ENCODE measurements at regions of chr11 and their contacts with region 1.

Region 1: DNA sequence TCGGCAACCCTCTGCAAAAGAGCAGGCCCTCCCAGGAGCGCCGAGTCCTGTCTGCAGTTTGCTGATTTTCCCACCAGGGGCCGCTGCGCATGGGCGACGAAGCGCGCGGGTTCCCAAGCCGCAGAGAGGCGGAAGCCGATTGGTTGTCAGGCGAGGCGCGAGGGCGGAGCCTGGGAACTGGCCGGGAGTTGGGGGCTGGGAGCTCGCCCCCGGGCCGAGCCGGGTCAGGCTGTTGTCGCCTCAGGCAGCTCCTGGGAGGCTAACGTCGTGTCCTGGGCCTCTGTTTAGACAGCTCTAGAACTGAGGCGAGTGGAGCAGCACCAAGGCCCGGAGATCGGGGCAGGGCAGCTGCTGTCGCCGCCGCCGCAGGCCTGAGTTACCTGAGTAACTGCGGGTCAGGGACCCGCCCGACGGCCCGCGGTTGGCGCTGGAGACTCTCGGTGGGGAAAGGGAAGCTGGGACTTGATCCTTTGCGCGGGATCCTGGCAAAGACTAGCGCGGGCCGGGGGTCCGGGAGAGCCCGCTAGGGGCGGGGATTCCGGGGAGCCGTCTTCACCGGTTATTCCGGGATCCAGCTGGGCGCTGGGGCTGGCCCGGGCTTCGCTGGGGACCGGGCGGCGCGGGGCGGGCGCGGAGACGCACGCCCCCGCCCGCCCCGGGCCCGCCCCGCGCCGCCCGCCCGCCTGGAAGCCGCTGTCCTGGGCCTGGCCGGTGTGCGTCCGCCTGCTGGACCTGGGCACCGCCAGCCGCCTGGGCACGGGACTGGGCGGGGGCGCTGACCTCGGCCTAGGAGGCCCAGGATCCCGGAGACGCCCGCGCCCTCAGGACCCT is at the start of gene STIM1:
- DNase-seq: peak; percentile 96 to 98 (median 97)
- H3K4me3 ChIP-seq: peak within 1 kb of the TSS; percentile 91 to 92
- H3K4me3 Mint-ChIP-seq: peak within 1 kb of the TSS; percentile 90 to 97 (median 94)
- H3K27ac ChIP-seq: peak within 1 kb of the TSS; percentile 94
- H3K27ac Mint-ChIP-seq: peak within 1 kb of the TSS; percentile 99 to 100 (median 99)
- H3K4me1 ChIP-seq: peaks cover 64% of the 10 kb centered on the region
- H3K4me1 Mint-ChIP-seq: peaks cover 49 to 71% (median 61%) of the 10 kb centered on the region in 4 donors
- H3K27me3 ChIP-seq: no peaks in the 10 kb centered on the region
- H3K27me3 Mint-ChIP-seq: no peaks in the 10 kb centered on the region
- total RNA-seq, gene STIM1: 87.1 to 87.4 TPM

Region 2: GRCh38 chr11:3807909-3808860 is 47.0 kb before region 1 on chr11 and contains the start of gene PGAP2:
- CTCF ChIA-PET with region 1: interaction called, 24 read pairs
- POLR2A ChIA-PET with region 1: interaction called, 27 read pairs
- intact Hi-C with region 1: no loop called
- DNase-seq: peak; percentile 42 to 62 (median 48)
- H3K4me3 ChIP-seq: peak within 1 kb of the TSS; percentile 81 to 85
- H3K4me3 Mint-ChIP-seq: peak within 1 kb of the TSS; percentile 92 to 99 (median 97)
- H3K27ac ChIP-seq: peak within 1 kb of the TSS; percentile 68
- H3K27ac Mint-ChIP-seq: peak within 1 kb of the TSS; percentile 82 to 99 (median 95)
- H3K4me1 ChIP-seq: peaks cover 10% of the 10 kb centered on the region
- H3K4me1 Mint-ChIP-seq: peaks cover 6 to 18% (median 14%) of the 10 kb centered on the region in 4 donors
- H3K27me3 ChIP-seq: no peaks in the 10 kb centered on the region
- H3K27me3 Mint-ChIP-seq: no peaks in the 10 kb centered on the region
- total RNA-seq, gene PGAP2: 18.4 to 20.7 TPM

Region 3: GRCh38 chr11:3880724-3881123 is 25.5 kb after region 1 on chr11:
- CTCF ChIA-PET with region 1: interaction called, 368 read pairs
- POLR2A ChIA-PET with region 1: interaction called, 58 read pairs
- intact Hi-C with region 1: loop called (anchors 1 kb)
- DNase-seq: no peak
- H3K4me3 ChIP-seq: no peak overlapping the region
- H3K4me3 Mint-ChIP-seq: peak overlapping the region in 5 of 8 donors; percentile 13 to 64 (median 44)
- H3K27ac ChIP-seq: no peak overlapping the region
- H3K27ac Mint-ChIP-seq: peak overlapping the region; percentile 2 to 92 (median 68)
- H3K4me1 ChIP-seq: peaks cover 73% of the 10 kb centered on the region
- H3K4me1 Mint-ChIP-seq: peaks cover 61 to 90% (median 74%) of the 10 kb centered on the region in 4 donors
- H3K27me3 ChIP-seq: no peaks in the 10 kb centered on the region
- H3K27me3 Mint-ChIP-seq: no peaks in the 10 kb centered on the region

Region 4: GRCh38 chr11:3920148-3920852 is 65.1 kb after region 1 on chr11:
- CTCF ChIA-PET with region 1: interaction called, 24 read pairs
- POLR2A ChIA-PET with region 1: interaction called, 7 read pairs
- intact Hi-C with region 1: loop called (anchors 5 kb)
- DNase-seq: peak; percentile 36 to 80 (median 46)
- H3K4me3 ChIP-seq: no peak overlapping the region
- H3K4me3 Mint-ChIP-seq: peak overlapping the region in 7 of 8 donors; percentile 1 to 67 (median 48)
- H3K27ac ChIP-seq: no peak overlapping the region
- H3K27ac Mint-ChIP-seq: peak overlapping the region; percentile 8 to 83 (median 48)
- H3K4me1 ChIP-seq: peaks cover 50% of the 10 kb centered on the region
- H3K4me1 Mint-ChIP-seq: peaks cover 37 to 60% (median 49%) of the 10 kb centered on the region in 4 donors
- H3K27me3 ChIP-seq: no peaks in the 10 kb centered on the region
- H3K27me3 Mint-ChIP-seq: no peaks in the 10 kb centered on the region

Region 5: GRCh38 chr11:3959015-3959919 is 104.1 kb after region 1 on chr11:
- CTCF ChIA-PET with region 1: interaction called, 23 read pairs
- POLR2A ChIA-PET with region 1: interaction called, 10 read pairs
- intact Hi-C with region 1: no loop called
- DNase-seq: no peak
- H3K4me3 ChIP-seq: no peak overlapping the region
- H3K4me3 Mint-ChIP-seq: peak overlapping the region in 3 of 8 donors; percentile 1 to 6 (median 4)
- H3K27ac ChIP-seq: no peak overlapping the region
- H3K27ac Mint-ChIP-seq: peak overlapping the region in 3 of 7 donors; percentile 11 to 68 (median 37)
- H3K4me1 ChIP-seq: peaks cover 60% of the 10 kb centered on the region
- H3K4me1 Mint-ChIP-seq: peaks cover 50 to 90% (median 71%) of the 10 kb centered on the region in 4 donors
- H3K27me3 ChIP-seq: no peaks in the 10 kb centered on the region
- H3K27me3 Mint-ChIP-seq: no peaks in the 10 kb centered on the region

Region 6: GRCh38 chr11:4044976-4045646 is 189.9 kb after region 1 on chr11:
- CTCF ChIA-PET with region 1: interaction called, 15 read pairs
- POLR2A ChIA-PET with region 1: interaction called, 25 read pairs
- intact Hi-C with region 1: no loop called
- DNase-seq: no peak
- H3K4me3 ChIP-seq: no peak overlapping the region
- H3K4me3 Mint-ChIP-seq: no peak overlapping the region
- H3K27ac ChIP-seq: no peak overlapping the region
- H3K27ac Mint-ChIP-seq: peak overlapping the region in 6 of 7 donors; percentile 11 to 84 (median 42)
- H3K4me1 ChIP-seq: peaks cover 10% of the 10 kb centered on the region
- H3K4me1 Mint-ChIP-seq: peaks cover 24 to 39% (median 31%) of the 10 kb centered on the region in 4 donors
- H3K27me3 ChIP-seq: no peaks in the 10 kb centered on the region
- H3K27me3 Mint-ChIP-seq: no peaks in the 10 kb centered on the region

Region 7: DNA sequence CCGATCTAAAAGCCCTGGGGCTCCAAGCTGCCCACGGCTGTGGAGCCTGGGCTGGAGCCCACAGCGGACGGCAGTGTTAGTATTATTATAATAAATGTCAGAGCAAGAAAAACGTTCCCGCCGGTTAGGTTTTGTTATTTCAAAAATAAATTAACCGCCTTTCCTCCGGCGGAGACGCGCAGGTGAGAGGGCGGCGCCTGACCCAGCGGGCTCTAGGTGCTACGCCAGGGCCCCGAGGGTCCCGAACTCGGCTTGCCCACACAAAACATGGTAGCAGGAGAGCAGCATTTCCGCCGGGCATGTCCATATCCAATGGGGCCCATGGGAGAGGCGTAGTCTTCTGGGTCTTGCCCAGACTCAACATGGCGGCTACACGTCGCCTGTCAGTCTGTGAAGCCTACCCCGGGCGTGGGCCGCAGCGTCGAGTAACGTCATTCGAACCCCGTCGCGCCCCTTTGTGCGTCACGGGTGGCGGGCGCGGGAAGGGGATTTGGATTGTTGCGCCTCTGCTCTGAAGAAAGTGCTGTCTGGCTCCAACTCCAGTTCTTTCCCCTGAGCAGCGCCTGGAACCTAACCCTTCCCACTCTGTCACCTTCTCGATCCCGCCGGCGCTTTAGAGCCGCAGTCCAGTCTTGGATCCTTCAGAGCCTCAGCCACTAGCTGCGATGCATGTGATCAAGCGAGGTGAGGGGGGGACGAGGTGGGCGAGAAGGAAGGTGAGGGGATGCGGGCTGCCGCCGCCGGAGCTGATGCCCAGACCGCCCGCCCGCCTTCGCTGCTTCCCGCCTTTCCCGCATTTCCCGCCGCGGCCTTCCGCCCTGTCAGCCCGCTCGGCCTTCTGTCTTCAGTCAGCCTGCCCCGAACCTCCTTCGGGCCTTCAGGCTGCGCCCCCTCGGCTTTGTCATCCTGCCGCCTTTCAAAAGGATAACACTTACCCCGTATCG is 239.4 kb after region 1 on chr11 and contains the start of gene RRM1:
- CTCF ChIA-PET with region 1: interaction called, 8 read pairs
- POLR2A ChIA-PET with region 1: interaction called, 36 read pairs
- intact Hi-C with region 1: no loop called
- DNase-seq: peak; percentile 93 to 95 (median 94)
- H3K4me3 ChIP-seq: peak within 1 kb of the TSS; percentile 84 to 91
- H3K4me3 Mint-ChIP-seq: peak within 1 kb of the TSS; percentile 89 to 99 (median 98)
- H3K27ac ChIP-seq: peak within 1 kb of the TSS; percentile 90
- H3K27ac Mint-ChIP-seq: peak within 1 kb of the TSS; percentile 94 to 100 (median 99)
- H3K4me1 ChIP-seq: peaks cover 85% of the 10 kb centered on the region
- H3K4me1 Mint-ChIP-seq: peaks cover 60 to 90% (median 72%) of the 10 kb centered on the region in 4 donors
- H3K27me3 ChIP-seq: no peaks in the 10 kb centered on the region
- H3K27me3 Mint-ChIP-seq: no peaks in the 10 kb centered on the region
- total RNA-seq, gene RRM1: 38.0 to 40.6 TPM